Dendritic cell treated with granulocyte-macrophage colony-stimulating factor and Interleukin-4, amounts not matched to agents 40 ng/mL and 50 ng/mL, for 4 days (primary cell): ENCODE measurements at regions of chr18 and their contacts with region 1.

Region 1: GRCh38 chr18:50878345-50879301 is at the start of gene ME2:
- H3K4me3 Mint-ChIP-seq: peak within 1 kb of the TSS; percentile 98
- H3K27ac Mint-ChIP-seq: peak within 1 kb of the TSS; percentile 98
- H3K4me1 Mint-ChIP-seq: peaks cover 27% of the 10 kb centered on the region
- H3K27me3 Mint-ChIP-seq: no peaks in the 10 kb centered on the region

Region 2: GRCh38 chr18:50528806-50529205 is 349.8 kb before region 1 on chr18:
- intact Hi-C with region 1: no loop called
- H3K4me3 Mint-ChIP-seq: no peak overlapping the region
- H3K27ac Mint-ChIP-seq: no peak overlapping the region
- H3K4me1 Mint-ChIP-seq: no peaks in the 10 kb centered on the region
- H3K27me3 Mint-ChIP-seq: no peaks in the 10 kb centered on the region

Region 3: GRCh38 chr18:50967714-50968661 is 89.4 kb after region 1 on chr18 and contains the start of gene ELAC1:
- intact Hi-C with region 1: loop called (anchors 5 kb)
- H3K4me3 Mint-ChIP-seq: peak within 1 kb of the TSS; percentile 83
- H3K27ac Mint-ChIP-seq: peak within 1 kb of the TSS; percentile 87
- H3K4me1 Mint-ChIP-seq: peaks cover 21% of the 10 kb centered on the region
- H3K27me3 Mint-ChIP-seq: no peaks in the 10 kb centered on the region